Activated naive CD4-positive, alpha-beta T cell treated with anti-CD3 and anti-CD28 coated beads for 36 hours (primary cell): ENCODE measurements at regions of chr4 and their contacts with region 1.

Region 1: GRCh38 chr4:17544205-17544604 is 29.2 kb downstream of the CLRN2 start:
- DNase-seq: no peak
- H3K4me3 Mint-ChIP-seq: no peak overlapping the region
- H3K27ac Mint-ChIP-seq: no peak overlapping the region
- H3K4me1 Mint-ChIP-seq: no peaks in the 10 kb centered on the region
- H3K27me3 Mint-ChIP-seq: peaks cover 6% of the 10 kb centered on the region

Region 2: DNA sequence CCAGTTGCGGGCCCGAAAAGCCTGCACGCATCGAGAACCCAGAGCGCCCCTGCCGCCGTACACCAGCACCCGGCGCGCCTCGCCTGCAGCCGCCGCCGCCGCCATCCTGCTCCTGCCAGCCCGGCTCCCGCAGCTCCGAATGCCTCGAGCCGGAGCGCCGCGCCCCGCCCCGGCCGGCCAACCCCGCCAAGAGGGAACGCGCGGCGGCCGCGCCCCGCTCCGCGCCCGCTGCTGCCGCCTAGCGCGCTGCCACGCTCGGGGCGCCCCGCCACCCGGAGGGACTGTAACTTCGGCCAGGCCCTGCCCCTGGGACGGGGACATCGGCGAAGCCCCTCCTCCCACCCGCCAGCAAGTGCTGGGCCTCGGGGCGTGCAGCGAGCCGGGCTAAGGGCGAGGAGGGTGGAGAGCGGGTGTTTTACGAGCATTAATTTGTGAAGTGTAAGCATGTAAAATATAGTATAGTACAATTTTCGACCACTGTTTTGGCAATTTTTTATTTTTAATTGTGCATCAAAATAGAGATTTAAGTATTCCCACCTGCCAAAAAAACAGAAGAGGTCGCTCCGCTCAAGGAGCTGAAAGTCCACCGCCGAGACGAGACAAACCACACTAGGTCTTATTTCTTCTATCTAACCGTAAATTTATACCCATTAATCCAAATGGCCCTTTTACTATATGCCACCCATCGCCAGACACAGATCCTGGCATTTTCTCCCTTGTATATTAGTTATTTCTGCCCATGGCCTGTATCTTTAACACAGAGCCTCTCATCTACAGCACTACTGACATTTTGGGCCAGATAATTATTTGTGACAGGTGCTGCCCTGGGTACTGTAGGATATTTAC is 32.0 kb before region 1 on chr4 and contains the start of gene QDPR:
- CTCF ChIA-PET with region 1: interaction called, 10 read pairs
- intact Hi-C with region 1: loop called (anchors 1 kb)
- DNase-seq: peak; percentile 76
- H3K4me3 Mint-ChIP-seq: peak within 1 kb of the TSS; percentile 89
- H3K27ac Mint-ChIP-seq: peak within 1 kb of the TSS; percentile 63
- H3K4me1 Mint-ChIP-seq: peaks cover 21% of the 10 kb centered on the region
- H3K27me3 Mint-ChIP-seq: no peaks in the 10 kb centered on the region
- total RNA-seq, gene QDPR: 42.2 to 43.8 TPM

Region 3: DNA sequence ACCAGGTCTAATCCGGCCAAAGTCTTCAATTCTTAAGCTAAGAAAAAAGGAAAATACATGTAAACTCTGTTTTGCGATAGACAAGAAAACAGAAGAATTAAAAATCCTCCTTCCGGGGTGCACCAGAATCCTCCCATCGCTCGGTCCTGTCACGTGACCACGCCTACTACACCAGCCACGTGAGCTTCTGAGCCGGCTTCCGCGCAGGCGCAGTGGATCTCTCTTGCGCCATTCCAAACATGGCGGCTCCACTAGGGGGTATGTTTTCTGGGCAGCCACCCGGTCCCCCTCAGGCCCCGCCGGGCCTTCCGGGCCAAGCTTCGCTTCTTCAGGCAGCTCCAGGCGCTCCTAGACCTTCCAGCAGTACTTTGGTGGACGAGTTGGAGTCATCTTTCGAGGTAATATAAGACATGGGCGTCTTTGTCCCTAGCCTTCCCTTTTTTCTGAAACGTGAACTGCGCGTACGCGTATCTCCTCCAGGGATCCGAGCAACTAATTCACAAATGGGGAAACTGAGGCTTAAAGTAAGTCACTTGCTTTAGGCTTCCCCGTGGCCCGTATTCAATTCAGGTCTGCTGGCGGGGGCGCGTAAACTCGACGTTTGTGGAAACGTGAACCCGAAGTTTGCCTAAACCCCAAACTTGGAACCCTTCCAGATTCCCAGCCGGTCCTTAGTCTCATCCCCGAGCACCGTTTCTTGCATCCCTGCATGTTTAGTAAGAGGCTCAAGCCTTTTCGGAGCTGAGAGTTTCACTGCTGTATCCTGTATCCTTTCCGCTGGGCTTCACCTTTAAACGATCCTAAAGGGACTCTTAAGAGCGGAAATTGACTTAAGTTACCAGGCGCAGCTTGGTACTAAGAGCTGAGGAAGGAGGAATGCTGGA is 70.5 kb after region 1 on chr4 and contains the start of gene MED28:
- CTCF ChIA-PET with region 1: interaction called, 5 read pairs
- intact Hi-C with region 1: loop called (anchors 1 kb)
- DNase-seq: peak; percentile 98
- H3K4me3 Mint-ChIP-seq: peak within 1 kb of the TSS; percentile 98
- H3K27ac Mint-ChIP-seq: peak within 1 kb of the TSS; percentile 85
- H3K4me1 Mint-ChIP-seq: peaks cover 49% of the 10 kb centered on the region
- H3K27me3 Mint-ChIP-seq: no peaks in the 10 kb centered on the region
- total RNA-seq, gene MED28: 52.3 to 59.5 TPM

Region 4: DNA sequence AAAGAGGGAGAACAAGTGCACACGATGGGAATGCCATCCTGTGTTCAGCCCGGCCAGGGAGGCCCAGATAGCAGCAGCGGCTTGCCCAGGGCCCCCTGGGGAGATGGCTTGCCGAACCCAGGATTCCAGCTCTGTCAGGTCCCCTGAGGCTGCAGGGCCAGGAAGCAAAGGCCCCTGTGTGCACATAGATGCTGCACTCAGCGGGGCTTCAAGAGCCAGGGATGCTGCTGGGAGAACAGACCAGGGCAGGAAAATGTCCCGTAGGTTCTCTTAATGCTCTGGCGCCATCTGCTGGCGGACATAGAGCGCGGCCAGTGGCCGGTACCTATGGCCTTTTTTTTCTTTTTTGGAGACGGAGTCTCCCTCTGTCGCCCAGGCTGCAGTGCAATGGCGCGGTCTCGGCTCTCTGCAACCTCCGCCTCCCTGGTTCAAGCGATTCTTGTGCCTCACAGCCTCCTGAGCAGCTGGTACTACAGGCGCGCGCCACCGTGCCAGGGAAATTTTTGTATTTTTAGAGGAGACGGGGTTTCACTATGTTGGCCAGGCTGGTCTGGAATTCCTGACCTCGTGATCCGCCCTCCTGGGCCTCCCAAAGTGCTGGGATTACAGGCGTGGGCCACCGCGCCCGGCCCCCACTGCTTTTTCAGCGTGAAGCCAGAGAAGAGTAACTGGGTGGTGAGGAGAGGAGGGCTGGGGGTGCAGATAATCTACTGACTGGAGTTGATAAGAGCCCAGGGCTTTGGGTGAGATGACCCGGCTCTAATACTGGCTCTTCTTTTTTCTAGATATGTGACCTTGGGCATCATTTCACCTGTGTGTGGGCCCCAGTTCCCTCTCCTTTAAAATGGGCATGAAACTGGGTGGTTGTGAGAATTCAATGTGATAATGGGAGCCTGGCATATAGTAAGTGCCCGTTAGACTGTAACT is 92.8 kb after region 1 on chr4:
- CTCF ChIA-PET with region 1: interaction called, 53 read pairs
- intact Hi-C with region 1: loop called (anchors 1 kb)
- DNase-seq: peak; percentile 82
- H3K4me3 Mint-ChIP-seq: no peak overlapping the region
- H3K27ac Mint-ChIP-seq: no peak overlapping the region
- H3K4me1 Mint-ChIP-seq: no peaks in the 10 kb centered on the region
- H3K27me3 Mint-ChIP-seq: no peaks in the 10 kb centered on the region

Region 5: GRCh38 chr4:18021722-18022571 is 477.7 kb after region 1 on chr4 and contains the start of gene LCORL:
- CTCF ChIA-PET with region 1: no interaction called
- intact Hi-C with region 1: loop called (anchors 1 kb)
- DNase-seq: peak; percentile 89
- H3K4me3 Mint-ChIP-seq: peak within 1 kb of the TSS; percentile 98
- H3K27ac Mint-ChIP-seq: peak within 1 kb of the TSS; percentile 79
- H3K4me1 Mint-ChIP-seq: peaks cover 14% of the 10 kb centered on the region
- H3K27me3 Mint-ChIP-seq: peaks cover 16% of the 10 kb centered on the region
- total RNA-seq, gene LCORL: 8.6 to 9.4 TPM

Region 6: DNA sequence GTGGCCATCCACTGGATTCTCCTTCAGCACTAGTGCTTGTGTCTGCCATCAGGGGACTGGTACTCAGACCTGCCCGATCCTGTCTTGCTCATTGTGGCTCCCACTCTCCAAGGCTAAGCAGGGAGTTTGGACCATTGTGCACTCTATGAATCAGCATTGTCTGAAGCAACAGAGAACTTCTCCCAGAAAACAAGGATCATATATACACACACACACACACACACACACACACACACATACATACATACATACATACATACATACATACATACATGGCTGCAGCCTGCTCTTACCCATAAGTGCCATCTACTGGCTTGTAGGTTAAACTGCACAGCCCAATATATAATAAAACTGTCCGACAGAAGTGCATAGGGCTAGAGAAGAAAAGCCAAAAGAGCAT is 822.7 kb after region 1 on chr4:
- CTCF ChIA-PET with region 1: no interaction called
- intact Hi-C with region 1: loop called (anchors 1 kb)
- DNase-seq: peak; percentile 7
- H3K4me3 Mint-ChIP-seq: no peak overlapping the region
- H3K27ac Mint-ChIP-seq: no peak overlapping the region
- H3K4me1 Mint-ChIP-seq: no peaks in the 10 kb centered on the region
- H3K27me3 Mint-ChIP-seq: peaks cover 14% of the 10 kb centered on the region